Naive thymus-derived CD4-positive, alpha-beta T cell (primary cell): ENCODE measurements at regions of chr1 and their contacts with region 1.

Region 1: GRCh38 chr1:233304489-233305102 is 9.1 kb upstream of the PCNX2 start:
- DNase-seq: peak in 5 of 9 donors; percentile 17 to 41 (median 33)
- ATAC-seq: peak; percentile 61
- H3K4me3 ChIP-seq: no peak overlapping the region
- H3K4me3 Mint-ChIP-seq: no peak overlapping the region
- H3K27ac ChIP-seq: no peak overlapping the region
- H3K27ac Mint-ChIP-seq: no peak overlapping the region
- H3K4me1 ChIP-seq: no peaks in the 10 kb centered on the region
- H3K4me1 Mint-ChIP-seq: no peaks in the 10 kb centered on the region
- H3K27me3 ChIP-seq: no peaks in the 10 kb centered on the region
- H3K27me3 Mint-ChIP-seq: peaks cover 9 to 46% (median 19%) of the 10 kb centered on the region in 5 donors

Region 2: GRCh38 chr1:232950197-232951176 is 354.1 kb before region 1 on chr1 and contains the start of gene NTPCR:
- CTCF ChIA-PET with region 1: no interaction called
- POLR2A ChIA-PET with region 1: no interaction called
- intact Hi-C with region 1: no loop called
- DNase-seq: peak; percentile 84 to 99 (median 93)
- ATAC-seq: peak; percentile 88
- H3K4me3 ChIP-seq: peak within 1 kb of the TSS; percentile 76
- H3K4me3 Mint-ChIP-seq: peak within 1 kb of the TSS; percentile 90 to 98 (median 96)
- H3K27ac ChIP-seq: peak within 1 kb of the TSS; percentile 80
- H3K27ac Mint-ChIP-seq: peak within 1 kb of the TSS; percentile 90 to 97 (median 92)
- H3K4me1 ChIP-seq: peaks cover 8 to 18% of the 10 kb centered on the region in 2 donors
- H3K4me1 Mint-ChIP-seq: peaks cover 23 to 43% (median 42%) of the 10 kb centered on the region in 7 donors
- H3K27me3 ChIP-seq: no peaks in the 10 kb centered on the region
- H3K27me3 Mint-ChIP-seq: no peaks in the 10 kb centered on the region
- total RNA-seq, gene NTPCR: 16.0 to 28.7 (median 17.3) TPM

Region 3: GRCh38 chr1:233253832-233254331 is 50.7 kb before region 1 on chr1:
- CTCF ChIA-PET with region 1: no interaction called
- POLR2A ChIA-PET with region 1: no interaction called
- intact Hi-C with region 1: no loop called
- DNase-seq: no peak
- ATAC-seq: no peak
- H3K4me3 ChIP-seq: no peak overlapping the region
- H3K4me3 Mint-ChIP-seq: no peak overlapping the region
- H3K27ac ChIP-seq: no peak overlapping the region
- H3K27ac Mint-ChIP-seq: no peak overlapping the region
- H3K4me1 ChIP-seq: no peaks in the 10 kb centered on the region
- H3K4me1 Mint-ChIP-seq: peaks cover 0 to 7% (median 0%) of the 10 kb centered on the region in 7 donors
- H3K27me3 ChIP-seq: no peaks in the 10 kb centered on the region
- H3K27me3 Mint-ChIP-seq: no peaks in the 10 kb centered on the region

Region 4: GRCh38 chr1:233364695-233365539 is 60.3 kb after region 1 on chr1:
- CTCF ChIA-PET with region 1: interaction called, 3 read pairs
- POLR2A ChIA-PET with region 1: no interaction called
- intact Hi-C with region 1: loop called (anchors 1 to 2 kb)
- DNase-seq: peak in 1 of 9 donors; percentile 7
- ATAC-seq: no peak
- H3K4me3 ChIP-seq: no peak overlapping the region
- H3K4me3 Mint-ChIP-seq: no peak overlapping the region
- H3K27ac ChIP-seq: no peak overlapping the region
- H3K27ac Mint-ChIP-seq: no peak overlapping the region
- H3K4me1 ChIP-seq: no peaks in the 10 kb centered on the region
- H3K4me1 Mint-ChIP-seq: no peaks in the 10 kb centered on the region
- H3K27me3 ChIP-seq: no peaks in the 10 kb centered on the region
- H3K27me3 Mint-ChIP-seq: peaks cover 2 to 9% (median 8%) of the 10 kb centered on the region in 5 donors

Region 5: GRCh38 chr1:233394860-233395717 is 90.5 kb after region 1 on chr1:
- CTCF ChIA-PET with region 1: no interaction called
- POLR2A ChIA-PET with region 1: no interaction called
- intact Hi-C with region 1: loop called in 1 of 2 experiments (anchors 1 kb)
- DNase-seq: peak in 5 of 9 donors; percentile 9 to 36 (median 17)
- ATAC-seq: peak; percentile 61
- H3K4me3 ChIP-seq: no peak overlapping the region
- H3K4me3 Mint-ChIP-seq: no peak overlapping the region
- H3K27ac ChIP-seq: no peak overlapping the region
- H3K27ac Mint-ChIP-seq: no peak overlapping the region
- H3K4me1 ChIP-seq: no peaks in the 10 kb centered on the region
- H3K4me1 Mint-ChIP-seq: no peaks in the 10 kb centered on the region
- H3K27me3 ChIP-seq: peaks cover 0 to 3% of the 10 kb centered on the region in 2 donors
- H3K27me3 Mint-ChIP-seq: peaks cover 27 to 45% (median 38%) of the 10 kb centered on the region in 5 donors

Region 6: GRCh38 chr1:233730809-233731208 is 426.2 kb after region 1 on chr1:
- CTCF ChIA-PET with region 1: no interaction called
- POLR2A ChIA-PET with region 1: no interaction called
- intact Hi-C with region 1: no loop called
- DNase-seq: no peak
- ATAC-seq: no peak
- H3K4me3 ChIP-seq: no peak overlapping the region
- H3K4me3 Mint-ChIP-seq: no peak overlapping the region
- H3K27ac ChIP-seq: no peak overlapping the region
- H3K27ac Mint-ChIP-seq: no peak overlapping the region
- H3K4me1 ChIP-seq: no peaks in the 10 kb centered on the region
- H3K4me1 Mint-ChIP-seq: no peaks in the 10 kb centered on the region
- H3K27me3 ChIP-seq: no peaks in the 10 kb centered on the region
- H3K27me3 Mint-ChIP-seq: peaks cover 0 to 14% (median 0%) of the 10 kb centered on the region in 5 donors

Region 7: GRCh38 chr1:233790662-233791375 is 486.2 kb after region 1 on chr1:
- CTCF ChIA-PET with region 1: interaction called, 7 read pairs
- POLR2A ChIA-PET with region 1: no interaction called
- intact Hi-C with region 1: loop called in 1 of 2 experiments (anchors 1 kb)
- DNase-seq: peak in 6 of 9 donors; percentile 21 to 49 (median 33)
- ATAC-seq: peak; percentile 74
- H3K4me3 ChIP-seq: no peak overlapping the region
- H3K4me3 Mint-ChIP-seq: no peak overlapping the region
- H3K27ac ChIP-seq: no peak overlapping the region
- H3K27ac Mint-ChIP-seq: no peak overlapping the region
- H3K4me1 ChIP-seq: no peaks in the 10 kb centered on the region
- H3K4me1 Mint-ChIP-seq: no peaks in the 10 kb centered on the region
- H3K27me3 ChIP-seq: no peaks in the 10 kb centered on the region
- H3K27me3 Mint-ChIP-seq: peaks cover 14 to 35% (median 31%) of the 10 kb centered on the region in 5 donors

Region 8: GRCh38 chr1:234065794-234066447 is 761.3 kb after region 1 on chr1:
- CTCF ChIA-PET with region 1: interaction called, 10 read pairs
- POLR2A ChIA-PET with region 1: no interaction called
- intact Hi-C with region 1: loop called (anchors 1 kb)
- DNase-seq: peak; percentile 22 to 70 (median 40)
- ATAC-seq: no peak
- H3K4me3 ChIP-seq: no peak overlapping the region
- H3K4me3 Mint-ChIP-seq: no peak overlapping the region
- H3K27ac ChIP-seq: no peak overlapping the region
- H3K27ac Mint-ChIP-seq: no peak overlapping the region
- H3K4me1 ChIP-seq: no peaks in the 10 kb centered on the region
- H3K4me1 Mint-ChIP-seq: no peaks in the 10 kb centered on the region
- H3K27me3 ChIP-seq: no peaks in the 10 kb centered on the region
- H3K27me3 Mint-ChIP-seq: peaks cover 5 to 29% (median 10%) of the 10 kb centered on the region in 5 donors